MCF 10A (cell line): ENCODE measurements at regions of chr1 and their contacts with region 1.

Region 1: GRCh38 chr1:169348383-169349036 is 19.1 kb downstream of the NME7 start:
- DNase-seq: peak; percentile 77
- H3K4me3 Mint-ChIP-seq: no peak overlapping the region
- H3K27ac Mint-ChIP-seq: no peak overlapping the region
- H3K4me1 Mint-ChIP-seq: no peaks in the 10 kb centered on the region
- H3K27me3 Mint-ChIP-seq: no peaks in the 10 kb centered on the region
- CTCF ChIP-seq: peak; percentile 84

Region 2: GRCh38 chr1:168553680-168554553 is 794.6 kb before region 1 on chr1:
- CTCF ChIA-PET with region 1: no interaction called
- POLR2A ChIA-PET with region 1: no interaction called
- intact Hi-C with region 1: loop called (anchors 5 kb)
- DNase-seq: no peak
- H3K4me3 Mint-ChIP-seq: no peak overlapping the region
- H3K27ac Mint-ChIP-seq: no peak overlapping the region
- H3K4me1 Mint-ChIP-seq: peaks cover 22% of the 10 kb centered on the region
- H3K27me3 Mint-ChIP-seq: no peaks in the 10 kb centered on the region
- CTCF ChIP-seq: no peak

Region 3: GRCh38 chr1:168628807-168629206 is 719.7 kb before region 1 on chr1:
- CTCF ChIA-PET with region 1: interaction called, 19 read pairs
- POLR2A ChIA-PET with region 1: interaction called, 4 read pairs
- intact Hi-C with region 1: no loop called
- DNase-seq: peak; percentile 89
- H3K4me3 Mint-ChIP-seq: no peak overlapping the region
- H3K27ac Mint-ChIP-seq: peak overlapping the region; percentile 39
- H3K4me1 Mint-ChIP-seq: peaks cover 11% of the 10 kb centered on the region
- H3K27me3 Mint-ChIP-seq: no peaks in the 10 kb centered on the region
- CTCF ChIP-seq: no peak

Region 4: DNA sequence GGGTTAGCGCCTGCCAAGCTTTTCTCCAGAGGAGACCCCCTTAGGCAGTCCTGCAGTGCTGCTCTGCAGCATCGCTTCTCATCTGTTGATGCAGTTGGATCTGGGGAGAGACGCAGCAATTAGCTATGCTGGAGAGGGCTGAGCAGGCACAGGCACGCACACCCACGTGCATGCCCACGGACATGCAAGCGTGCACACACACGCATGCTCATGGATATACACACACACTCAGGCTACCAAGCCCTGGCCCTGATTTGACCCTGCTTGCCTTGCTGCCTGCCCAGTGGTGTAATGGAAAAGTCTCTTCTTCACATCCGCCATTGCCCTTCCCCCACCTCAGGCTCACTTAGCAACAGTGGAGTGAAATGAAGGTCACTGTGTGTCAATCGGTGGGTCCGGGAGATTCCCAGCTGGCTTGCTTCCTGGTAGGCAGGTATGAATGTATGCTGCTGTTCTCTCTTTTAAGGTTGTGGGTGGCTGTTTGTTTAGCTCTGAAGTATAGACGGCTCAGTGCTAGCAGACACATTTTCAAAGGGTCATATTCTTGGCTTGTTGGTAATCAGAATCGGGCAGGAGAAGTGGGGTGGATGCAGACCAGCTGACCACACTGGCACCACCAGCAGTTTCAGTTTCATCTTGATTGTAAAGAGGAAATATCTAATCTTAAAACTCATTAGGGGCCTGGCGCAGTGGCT is 232.5 kb before region 1 on chr1:
- CTCF ChIA-PET with region 1: interaction called, 25 read pairs
- POLR2A ChIA-PET with region 1: no interaction called
- intact Hi-C with region 1: no loop called
- DNase-seq: no peak
- H3K4me3 Mint-ChIP-seq: no peak overlapping the region
- H3K27ac Mint-ChIP-seq: peak overlapping the region; percentile 49
- H3K4me1 Mint-ChIP-seq: peaks cover 60% of the 10 kb centered on the region
- H3K27me3 Mint-ChIP-seq: no peaks in the 10 kb centered on the region
- CTCF ChIP-seq: no peak

Region 5: DNA sequence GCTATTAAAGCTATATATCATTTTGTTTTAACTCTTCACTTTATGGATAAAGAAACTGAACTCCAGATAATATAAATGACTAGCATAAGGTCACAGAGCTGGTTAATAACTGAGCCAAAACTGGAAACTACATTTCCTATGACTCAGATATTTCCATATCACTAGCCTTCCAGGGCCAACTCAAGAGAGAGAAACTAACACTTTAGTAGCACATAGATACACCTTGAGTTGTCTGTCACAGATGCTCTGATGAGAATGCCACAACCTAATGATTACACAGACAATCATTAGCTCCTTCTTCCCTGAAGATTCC is 21.6 kb before region 1 on chr1:
- CTCF ChIA-PET with region 1: interaction called, 16 read pairs
- POLR2A ChIA-PET with region 1: interaction called, 4 read pairs
- intact Hi-C with region 1: no loop called
- DNase-seq: peak; percentile 50
- H3K4me3 Mint-ChIP-seq: no peak overlapping the region
- H3K27ac Mint-ChIP-seq: no peak overlapping the region
- H3K4me1 Mint-ChIP-seq: peaks cover 3% of the 10 kb centered on the region
- H3K27me3 Mint-ChIP-seq: no peaks in the 10 kb centered on the region
- CTCF ChIP-seq: no peak